ENCODE measurements at regions of chr2 and their contacts with region 1.

Region 1: GRCh38 chr2:68521037-68521436 is 53.7 kb downstream of the APLF start:
- DNase-seq: no peak
- ATAC-seq: no peak
- H3K4me3 ChIP-seq: no peak overlapping the region
- H3K4me3 Mint-ChIP-seq: no peak overlapping the region
- H3K27ac ChIP-seq: no peak overlapping the region
- H3K27ac Mint-ChIP-seq: no peak overlapping the region
- H3K4me1 ChIP-seq: no peaks in the 10 kb centered on the region
- H3K4me1 Mint-ChIP-seq: no peaks in the 10 kb centered on the region
- H3K27me3 ChIP-seq: no peaks in the 10 kb centered on the region
- H3K27me3 Mint-ChIP-seq: no peaks in the 10 kb centered on the region
- CTCF ChIP-seq: no peak

Region 2: DNA sequence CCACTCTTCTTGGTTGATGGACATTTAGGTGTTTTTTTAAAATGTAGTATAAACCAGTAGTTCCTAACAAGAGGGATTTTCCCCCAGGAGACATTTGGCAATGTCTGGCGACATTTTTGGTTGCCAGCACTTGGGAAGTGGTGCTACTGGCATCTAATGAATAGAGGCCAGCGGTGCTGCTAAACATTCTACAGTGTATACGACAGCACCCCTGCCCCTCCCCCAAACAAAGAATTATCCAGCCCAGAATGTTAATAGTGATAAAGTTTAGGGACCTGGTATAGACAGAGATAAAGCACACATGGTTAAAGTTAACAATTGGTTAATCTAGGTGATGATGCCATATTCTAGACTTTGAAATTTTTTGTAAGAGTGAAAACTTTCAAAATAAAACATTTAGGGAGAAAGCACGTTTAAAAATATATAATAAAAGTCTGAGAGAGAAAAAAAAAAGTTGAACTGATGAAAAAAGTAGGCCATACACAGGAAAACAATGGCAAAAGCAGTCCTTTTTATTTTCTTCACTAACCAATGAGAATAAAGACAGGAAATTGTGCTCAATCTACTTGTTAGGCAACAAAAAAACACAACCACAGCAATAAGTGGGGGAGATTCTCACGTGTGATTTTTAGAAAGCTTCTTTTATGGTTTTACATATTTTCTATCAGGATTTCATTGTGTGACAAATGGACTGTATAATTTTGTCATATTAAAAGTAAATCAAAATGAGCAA is 68.7 kb before region 1 on chr2:
- CTCF ChIA-PET with region 1: no interaction called
- POLR2A ChIA-PET with region 1: interaction called, 3 read pairs
- intact Hi-C with region 1: loop called in 1 of 2 experiments (anchors 5 kb)
- DNase-seq: peak in 2 of 9 experiments; percentile 44 to 68
- ATAC-seq: peak; percentile 52
- H3K4me3 ChIP-seq: no peak overlapping the region
- H3K4me3 Mint-ChIP-seq: no peak overlapping the region
- H3K27ac ChIP-seq: no peak overlapping the region
- H3K27ac Mint-ChIP-seq: no peak overlapping the region
- H3K4me1 ChIP-seq: peaks cover 19% of the 10 kb centered on the region
- H3K4me1 Mint-ChIP-seq: peaks cover 18% of the 10 kb centered on the region
- H3K27me3 ChIP-seq: no peaks in the 10 kb centered on the region
- H3K27me3 Mint-ChIP-seq: no peaks in the 10 kb centered on the region
- CTCF ChIP-seq: no peak

Region 3: GRCh38 chr2:68506170-68506569 is 14.9 kb before region 1 on chr2:
- CTCF ChIA-PET with region 1: interaction called, 6 read pairs
- POLR2A ChIA-PET with region 1: interaction called, 9 read pairs
- intact Hi-C with region 1: loop called in 1 of 2 experiments (anchors 2 kb)
- DNase-seq: peak in 2 of 9 experiments; percentile 10 to 37
- ATAC-seq: no peak
- H3K4me3 ChIP-seq: no peak overlapping the region
- H3K4me3 Mint-ChIP-seq: peak overlapping the region; percentile 58
- H3K27ac ChIP-seq: peak overlapping the region in 1 of 2 experiments; percentile 11
- H3K27ac Mint-ChIP-seq: peak overlapping the region; percentile 75
- H3K4me1 ChIP-seq: peaks cover 20% of the 10 kb centered on the region
- H3K4me1 Mint-ChIP-seq: peaks cover 23% of the 10 kb centered on the region
- H3K27me3 ChIP-seq: no peaks in the 10 kb centered on the region
- H3K27me3 Mint-ChIP-seq: no peaks in the 10 kb centered on the region
- CTCF ChIP-seq: no peak

Region 4: DNA sequence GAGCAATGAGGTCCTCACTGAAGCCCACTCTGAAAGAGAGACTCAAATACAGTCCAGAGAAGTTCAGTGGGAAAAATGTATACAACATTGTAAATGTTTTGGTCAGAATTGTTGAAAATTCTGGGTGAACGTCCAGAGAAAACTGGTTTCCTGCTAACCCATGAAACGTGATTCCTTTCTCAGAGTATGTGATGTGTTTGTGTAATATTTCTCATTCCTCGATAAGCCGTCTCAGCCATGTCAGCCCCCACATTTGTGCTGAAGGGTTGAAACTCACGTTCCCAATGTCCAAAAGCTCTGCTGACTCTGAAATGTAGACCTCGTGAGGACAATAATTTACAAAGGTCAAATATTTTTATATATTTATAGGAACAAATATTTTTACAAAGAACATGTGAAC is 298.5 kb after region 1 on chr2:
- CTCF ChIA-PET with region 1: no interaction called
- POLR2A ChIA-PET with region 1: no interaction called
- intact Hi-C with region 1: no loop called
- DNase-seq: no peak
- ATAC-seq: no peak
- H3K4me3 ChIP-seq: no peak overlapping the region
- H3K4me3 Mint-ChIP-seq: no peak overlapping the region
- H3K27ac ChIP-seq: no peak overlapping the region
- H3K27ac Mint-ChIP-seq: peak overlapping the region; percentile 72
- H3K4me1 ChIP-seq: no peaks in the 10 kb centered on the region
- H3K4me1 Mint-ChIP-seq: peaks cover 12% of the 10 kb centered on the region
- H3K27me3 ChIP-seq: no peaks in the 10 kb centered on the region
- H3K27me3 Mint-ChIP-seq: no peaks in the 10 kb centered on the region
- CTCF ChIP-seq: no peak

Measured in CD8-positive, alpha-beta T cell (primary cell).